Dorsolateral prefrontal cortex (tissue), 120 donors: ENCODE measurements at regions of chr12 and their contacts with region 1.

Region 1: DNA sequence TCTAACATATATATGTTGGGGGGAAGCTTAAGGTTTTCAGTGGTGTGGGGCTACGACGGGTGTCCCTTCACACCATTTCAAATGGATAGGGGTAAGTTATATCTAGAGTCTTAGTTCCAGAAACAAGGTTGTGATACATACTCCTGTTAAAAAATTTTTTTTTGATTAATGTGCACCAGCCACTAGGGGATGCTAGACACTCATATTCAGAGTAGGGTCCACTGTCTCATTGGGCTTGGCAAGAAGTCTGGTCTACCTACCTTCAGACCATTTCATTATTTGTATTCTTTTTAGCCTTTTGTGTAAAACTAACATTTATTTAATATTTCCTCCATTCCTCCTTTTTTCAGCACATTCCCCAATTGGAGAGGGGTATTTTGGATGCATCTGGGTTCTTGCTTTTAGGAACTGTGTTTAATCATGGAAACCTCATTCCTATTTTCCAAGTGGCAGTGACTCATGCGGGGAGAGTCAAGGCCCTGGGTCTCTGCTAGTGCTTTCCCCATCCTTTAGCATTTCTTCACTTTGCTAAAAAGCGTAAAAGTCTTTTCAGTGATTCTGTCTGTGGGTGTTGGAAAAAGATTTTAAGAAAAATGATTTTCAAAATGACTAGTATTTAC is 33.4 kb downstream of the ANO4 start:
- DNase-seq: no peak
- H3K4me3 ChIP-seq: no peak overlapping the region
- H3K27ac ChIP-seq: no peak overlapping the region
- H3K27me3 ChIP-seq: no peaks in the 10 kb centered on the region
- CTCF ChIP-seq: peak; percentile 31 to 84 (median 66)

Region 2: GRCh38 chr12:100868487-100868886 is 40.5 kb after region 1 on chr12:
- intact Hi-C with region 1: no loop called
- DNase-seq: no peak
- H3K4me3 ChIP-seq: no peak overlapping the region
- H3K27ac ChIP-seq: no peak overlapping the region
- H3K27me3 ChIP-seq: no peaks in the 10 kb centered on the region
- CTCF ChIP-seq: no peak

Region 3: DNA sequence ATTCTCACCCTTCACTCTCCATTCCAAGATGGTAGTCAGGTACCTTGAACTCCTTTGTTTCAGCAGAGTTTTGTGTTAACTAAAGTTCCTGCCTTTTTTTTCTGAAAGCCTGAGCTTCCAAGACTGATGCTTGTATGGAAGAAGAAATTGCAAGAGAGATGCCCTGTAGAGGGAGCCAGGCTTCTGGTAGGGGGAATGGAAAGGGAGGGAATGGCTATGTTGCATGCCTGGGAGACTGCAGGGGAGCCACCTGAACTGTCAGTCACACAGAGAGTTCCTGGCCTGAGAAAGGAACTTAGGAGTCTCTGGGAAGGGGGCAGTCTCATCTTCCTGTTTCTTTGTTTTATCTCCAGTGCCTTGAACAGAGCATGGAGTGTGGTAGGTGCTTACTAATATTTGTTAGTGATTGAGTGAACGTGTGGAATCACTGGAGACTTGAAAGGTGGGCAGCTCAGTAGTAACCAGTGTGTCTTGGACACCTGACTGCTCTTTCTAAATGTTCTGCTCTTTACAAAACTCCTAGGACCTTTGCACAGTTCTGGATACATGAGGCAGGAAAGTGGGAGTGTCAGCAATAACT is 98.7 kb after region 1 on chr12:
- intact Hi-C with region 1: loop called in 1 of 2 experiments (anchors 10 kb)
- DNase-seq: no peak
- H3K4me3 ChIP-seq: no peak overlapping the region
- H3K27ac ChIP-seq: no peak overlapping the region
- H3K27me3 ChIP-seq: no peaks in the 10 kb centered on the region
- CTCF ChIP-seq: peak in 8 of 56 donors; percentile 5 to 35 (median 12)

Region 4: GRCh38 chr12:100987552-100988521 is 159.8 kb after region 1 on chr12:
- intact Hi-C with region 1: loop called in 1 of 2 experiments (anchors 5 kb)
- DNase-seq: peak in 4 of 10 donors; percentile 7 to 53 (median 36)
- H3K4me3 ChIP-seq: no peak overlapping the region
- H3K27ac ChIP-seq: peak overlapping the region in 6 of 59 donors; percentile 3 to 64 (median 18)
- H3K27me3 ChIP-seq: no peaks in the 10 kb centered on the region
- CTCF ChIP-seq: peak in 39 of 56 donors; percentile 5 to 52 (median 29)

Region 5: DNA sequence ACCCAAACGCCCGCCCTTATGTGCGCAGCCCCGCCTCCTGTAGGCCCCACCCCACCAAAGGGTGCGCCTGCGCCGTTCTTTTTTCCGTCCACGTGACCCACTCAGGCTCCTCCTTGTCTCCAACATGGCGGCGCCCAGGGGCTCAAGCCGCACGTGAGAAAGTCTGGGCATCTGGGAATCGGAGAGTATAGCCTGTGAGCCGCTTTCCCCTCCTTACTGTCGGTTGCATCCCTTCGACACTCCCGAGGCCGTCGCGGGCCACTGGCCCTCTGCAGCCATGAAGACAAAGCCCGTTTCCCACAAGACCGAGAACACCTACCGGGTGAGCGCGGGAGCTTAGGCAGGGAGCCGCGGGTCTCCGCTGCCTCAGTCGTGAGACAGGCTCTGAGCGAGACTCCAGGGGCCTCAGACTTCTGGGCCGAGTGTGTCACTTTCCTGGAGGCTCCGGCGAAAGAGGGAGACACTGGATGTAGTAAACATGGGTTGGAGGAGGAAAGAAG is 452.0 kb after region 1 on chr12 and contains the start of gene UTP20:
- intact Hi-C with region 1: loop called in 1 of 2 experiments (anchors 10 kb)
- DNase-seq: peak; percentile 90 to 98 (median 96)
- H3K4me3 ChIP-seq: peak within 1 kb of the TSS; percentile 66 to 100 (median 91)
- H3K27ac ChIP-seq: peak within 1 kb of the TSS in 19 of 59 donors; percentile 1 to 76 (median 39)
- H3K27me3 ChIP-seq: no peaks in the 10 kb centered on the region
- CTCF ChIP-seq: peak in 27 of 56 donors; percentile 6 to 49 (median 21)
- total RNA-seq, gene UTP20: 5.7 to 13.6 (median 9.9) TPM